K562 (cell line): ENCODE measurements at regions of chr13 and their contacts with region 1.

Region 1: DNA sequence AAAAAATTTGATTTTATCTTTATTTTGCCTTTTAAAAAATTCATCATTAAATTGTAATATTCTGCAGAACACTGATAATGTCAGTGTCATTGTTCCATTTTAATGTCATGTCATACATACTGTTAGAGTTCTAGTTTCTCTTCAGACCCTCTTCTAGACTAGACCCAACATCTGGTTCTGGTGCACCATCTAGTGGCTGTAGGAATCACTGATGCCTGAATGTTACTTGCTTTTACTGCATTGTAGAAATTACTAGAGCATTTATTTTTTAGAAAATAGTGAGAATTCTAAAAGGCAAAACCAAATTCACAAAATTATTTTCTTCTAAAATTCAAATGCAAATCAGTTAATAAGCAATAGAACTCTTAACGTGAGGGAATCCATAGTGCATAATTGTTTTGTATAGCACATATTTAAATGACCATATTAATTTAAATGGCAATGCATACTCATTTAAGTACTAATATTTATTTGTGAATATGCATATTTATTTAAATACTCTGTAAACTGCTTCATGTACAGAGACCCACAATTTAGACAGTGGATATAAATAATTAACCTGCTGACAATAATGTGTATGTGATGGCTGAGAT is 425.7 kb downstream of the KLF12 start:
- DNase-seq: peak; percentile 29 to 56 (median 34)
- ATAC-seq: peak; percentile 85
- H3K4me3 ChIP-seq: no peak overlapping the region
- H3K27ac ChIP-seq: no peak overlapping the region
- H3K4me1 ChIP-seq: no peaks in the 10 kb centered on the region
- H3K27me3 ChIP-seq: no peaks in the 10 kb centered on the region
- CTCF ChIP-seq: peak in 2 of 3 experiments; percentile 53 to 70; a peak in 4 of 6 replicates
- EP300 ChIP-seq: no peak
- POLR2A ChIP-seq: no peak
- RAD21 ChIP-seq: peak; percentile 77 to 86

Region 2: GRCh38 chr13:72808917-72809500 is 899.5 kb before region 1 on chr13:
- CTCF ChIA-PET with region 1: no interaction called
- POLR2A ChIA-PET with region 1: no interaction called
- in situ Hi-C with region 1: loop called (anchors 25 kb)
- intact Hi-C with region 1: no loop called
- DNase-seq: peak in 3 of 4 experiments; percentile 9 to 12 (median 12)
- ATAC-seq: peak; percentile 36; the same call in 1 of the 3 replicates
- H3K4me3 ChIP-seq: no peak overlapping the region
- H3K27ac ChIP-seq: no peak overlapping the region; the same call in 2 of the 3 replicates
- H3K4me1 ChIP-seq: peaks cover 0 to 2% of the 10 kb centered on the region in 2 experiments; a peak in 1 of 5 replicates
- H3K27me3 ChIP-seq: no peaks in the 10 kb centered on the region
- CTCF ChIP-seq: peak in 1 of 3 experiments; percentile 42; a peak in 2 of 6 replicates
- EP300 ChIP-seq: no peak
- POLR2A ChIP-seq: no peak
- RAD21 ChIP-seq: no peak

Region 3: DNA sequence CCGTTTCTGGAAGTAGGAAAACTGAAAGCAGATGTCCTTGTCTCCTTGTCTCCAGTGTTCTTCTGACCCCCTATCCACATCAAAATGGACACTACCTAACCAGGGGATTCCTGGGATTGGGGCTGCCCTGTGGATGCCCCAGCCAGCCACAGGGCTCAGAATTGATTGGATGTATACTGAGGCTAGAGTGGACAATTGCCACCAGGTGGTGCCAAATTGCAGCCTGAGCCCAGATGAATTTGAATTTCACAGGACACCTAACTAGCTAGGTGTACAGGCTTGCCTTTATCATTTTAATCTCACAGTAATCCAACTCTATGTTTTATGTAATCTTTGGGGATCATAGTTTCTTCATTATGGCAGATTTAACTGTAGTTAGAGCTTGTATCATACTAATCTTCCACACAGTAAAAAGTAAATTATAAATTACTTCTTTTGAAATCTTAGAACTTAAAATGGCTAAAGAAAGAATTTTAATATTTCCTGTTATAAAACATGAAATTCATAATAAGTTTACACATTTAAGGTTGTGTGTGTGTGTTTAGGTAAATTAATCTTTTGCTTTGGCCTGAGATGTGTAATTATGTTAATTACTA is 868.6 kb before region 1 on chr13:
- CTCF ChIA-PET with region 1: interaction called, 4 read pairs
- POLR2A ChIA-PET with region 1: no interaction called
- in situ Hi-C with region 1: no loop called
- intact Hi-C with region 1: loop called (anchors 5 kb)
- DNase-seq: peak; percentile 15 to 37 (median 27)
- ATAC-seq: peak; percentile 91
- H3K4me3 ChIP-seq: no peak overlapping the region
- H3K27ac ChIP-seq: no peak overlapping the region
- H3K4me1 ChIP-seq: no peaks in the 10 kb centered on the region
- H3K27me3 ChIP-seq: no peaks in the 10 kb centered on the region
- CTCF ChIP-seq: peak; percentile 46 to 58 (median 51)
- EP300 ChIP-seq: no peak
- POLR2A ChIP-seq: no peak
- RAD21 ChIP-seq: peak; percentile 26 to 59; a peak in 3 of 4 replicates

Region 4: GRCh38 chr13:73286976-73287674 is 421.4 kb before region 1 on chr13:
- CTCF ChIA-PET with region 1: no interaction called
- POLR2A ChIA-PET with region 1: no interaction called
- in situ Hi-C with region 1: no loop called
- intact Hi-C with region 1: loop called (anchors 10 kb)
- DNase-seq: no peak
- ATAC-seq: no peak
- H3K4me3 ChIP-seq: no peak overlapping the region
- H3K27ac ChIP-seq: no peak overlapping the region
- H3K4me1 ChIP-seq: no peaks in the 10 kb centered on the region
- H3K27me3 ChIP-seq: no peaks in the 10 kb centered on the region
- CTCF ChIP-seq: no peak
- EP300 ChIP-seq: no peak
- POLR2A ChIP-seq: no peak
- RAD21 ChIP-seq: no peak